B cell (primary cell): ENCODE measurements at regions of chr13 and their contacts with region 1.

Region 1: GRCh38 chr13:24693862-24694471 is 13.8 kb downstream of the ATP12A start:
- DNase-seq: peak; percentile 60
- ATAC-seq: peak; percentile 43
- H3K4me3 ChIP-seq: no peak overlapping the region
- H3K4me3 Mint-ChIP-seq: no peak overlapping the region
- H3K27ac ChIP-seq: no peak overlapping the region
- H3K27ac Mint-ChIP-seq: no peak overlapping the region
- H3K4me1 ChIP-seq: no peaks in the 10 kb centered on the region
- H3K4me1 Mint-ChIP-seq: peaks cover 3% of the 10 kb centered on the region
- H3K27me3 ChIP-seq: peaks cover 0 to 20% (median 3%) of the 10 kb centered on the region in 4 experiments
- H3K27me3 Mint-ChIP-seq: peaks cover 47% of the 10 kb centered on the region
- CTCF ChIP-seq: peak; percentile 63

Region 2: GRCh38 chr13:24540236-24541126 is 153.5 kb before region 1 on chr13:
- CTCF ChIA-PET with region 1: no interaction called
- POLR2A ChIA-PET with region 1: no interaction called
- intact Hi-C with region 1: no loop called
- DNase-seq: peak; percentile 13
- ATAC-seq: no peak
- H3K4me3 ChIP-seq: no peak overlapping the region
- H3K4me3 Mint-ChIP-seq: peak overlapping the region; percentile 88
- H3K27ac ChIP-seq: no peak overlapping the region
- H3K27ac Mint-ChIP-seq: no peak overlapping the region
- H3K4me1 ChIP-seq: peaks cover 7 to 10% of the 10 kb centered on the region in 2 donors
- H3K4me1 Mint-ChIP-seq: peaks cover 9% of the 10 kb centered on the region
- H3K27me3 ChIP-seq: peaks cover 0 to 31% (median 18%) of the 10 kb centered on the region in 4 experiments
- H3K27me3 Mint-ChIP-seq: peaks cover 42% of the 10 kb centered on the region
- CTCF ChIP-seq: no peak

Region 3: GRCh38 chr13:24727731-24728601 is 34.0 kb after region 1 on chr13:
- CTCF ChIA-PET with region 1: interaction called, 3 read pairs
- POLR2A ChIA-PET with region 1: no interaction called
- intact Hi-C with region 1: loop called (anchors 5 kb)
- DNase-seq: peak; percentile 71
- ATAC-seq: peak; percentile 88
- H3K4me3 ChIP-seq: no peak overlapping the region
- H3K4me3 Mint-ChIP-seq: no peak overlapping the region
- H3K27ac ChIP-seq: no peak overlapping the region
- H3K27ac Mint-ChIP-seq: no peak overlapping the region
- H3K4me1 ChIP-seq: peaks cover 0 to 3% of the 10 kb centered on the region in 2 donors
- H3K4me1 Mint-ChIP-seq: peaks cover 8% of the 10 kb centered on the region
- H3K27me3 ChIP-seq: no peaks in the 10 kb centered on the region
- H3K27me3 Mint-ChIP-seq: peaks cover 12% of the 10 kb centered on the region
- CTCF ChIP-seq: peak; percentile 69

Region 4: GRCh38 chr13:24995226-24995804 is 301.3 kb after region 1 on chr13:
- CTCF ChIA-PET with region 1: interaction called, 8 read pairs
- POLR2A ChIA-PET with region 1: no interaction called
- intact Hi-C with region 1: loop called (anchors 5 kb)
- DNase-seq: peak; percentile 77
- ATAC-seq: peak; percentile 65
- H3K4me3 ChIP-seq: no peak overlapping the region
- H3K4me3 Mint-ChIP-seq: no peak overlapping the region
- H3K27ac ChIP-seq: no peak overlapping the region
- H3K27ac Mint-ChIP-seq: no peak overlapping the region
- H3K4me1 ChIP-seq: no peaks in the 10 kb centered on the region
- H3K4me1 Mint-ChIP-seq: peaks cover 3% of the 10 kb centered on the region
- H3K27me3 ChIP-seq: peaks cover 0 to 9% (median 0%) of the 10 kb centered on the region in 4 experiments
- H3K27me3 Mint-ChIP-seq: peaks cover 40% of the 10 kb centered on the region
- CTCF ChIP-seq: peak; percentile 94

Region 5: GRCh38 chr13:25203127-25203740 is 509.3 kb after region 1 on chr13:
- CTCF ChIA-PET with region 1: no interaction called
- POLR2A ChIA-PET with region 1: no interaction called
- intact Hi-C with region 1: no loop called
- DNase-seq: no peak
- ATAC-seq: no peak
- H3K4me3 ChIP-seq: no peak overlapping the region
- H3K4me3 Mint-ChIP-seq: no peak overlapping the region
- H3K27ac ChIP-seq: no peak overlapping the region
- H3K27ac Mint-ChIP-seq: no peak overlapping the region
- H3K4me1 ChIP-seq: no peaks in the 10 kb centered on the region
- H3K4me1 Mint-ChIP-seq: no peaks in the 10 kb centered on the region
- H3K27me3 ChIP-seq: peaks cover 0 to 7% (median 2%) of the 10 kb centered on the region in 4 experiments
- H3K27me3 Mint-ChIP-seq: peaks cover 30% of the 10 kb centered on the region
- CTCF ChIP-seq: no peak